Calu3 (cell line): ENCODE measurements at regions of chr12 and their contacts with region 1.

Region 1: DNA sequence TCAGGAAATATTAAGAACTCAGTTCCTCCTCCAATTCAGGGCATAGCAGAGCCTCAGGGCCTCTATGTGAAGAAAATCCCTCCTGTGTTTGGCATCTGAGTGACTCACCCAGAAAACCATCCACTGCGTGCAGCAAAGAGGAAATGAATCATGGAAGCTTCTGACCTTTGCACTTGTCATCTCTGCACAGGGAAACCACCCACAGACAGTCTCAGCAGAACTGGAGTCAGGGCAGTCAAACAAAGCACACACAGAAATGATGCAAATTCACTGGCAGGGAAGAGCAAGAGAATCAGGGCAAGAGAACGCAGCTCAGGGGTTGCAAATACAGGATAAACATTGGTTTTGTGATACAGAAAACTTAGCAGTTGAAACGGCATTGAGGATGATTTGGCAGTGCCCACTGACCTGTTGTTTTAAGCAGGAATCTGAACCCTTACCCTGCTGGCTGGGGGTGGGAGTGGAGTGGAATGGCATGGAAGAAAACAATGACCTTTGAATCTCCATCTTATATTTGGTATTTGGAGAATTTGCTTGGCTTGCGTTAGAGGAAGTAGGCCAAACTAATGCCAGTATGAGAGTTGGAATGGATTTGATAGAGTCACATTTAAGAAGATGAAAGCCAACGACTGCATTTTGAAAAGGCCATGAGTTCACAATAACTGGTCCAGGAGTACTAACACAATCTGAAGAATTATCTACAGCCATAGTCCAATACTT is 53.5 kb downstream of the PHLDA1 start:
- DNase-seq: peak; percentile 92
- H3K4me3 Mint-ChIP-seq: peak overlapping the region; percentile 51
- H3K27ac Mint-ChIP-seq: peak overlapping the region; percentile 97
- H3K4me1 Mint-ChIP-seq: peaks cover 65% of the 10 kb centered on the region
- H3K27me3 Mint-ChIP-seq: no peaks in the 10 kb centered on the region
- CTCF ChIP-seq: no peak

Region 2: DNA sequence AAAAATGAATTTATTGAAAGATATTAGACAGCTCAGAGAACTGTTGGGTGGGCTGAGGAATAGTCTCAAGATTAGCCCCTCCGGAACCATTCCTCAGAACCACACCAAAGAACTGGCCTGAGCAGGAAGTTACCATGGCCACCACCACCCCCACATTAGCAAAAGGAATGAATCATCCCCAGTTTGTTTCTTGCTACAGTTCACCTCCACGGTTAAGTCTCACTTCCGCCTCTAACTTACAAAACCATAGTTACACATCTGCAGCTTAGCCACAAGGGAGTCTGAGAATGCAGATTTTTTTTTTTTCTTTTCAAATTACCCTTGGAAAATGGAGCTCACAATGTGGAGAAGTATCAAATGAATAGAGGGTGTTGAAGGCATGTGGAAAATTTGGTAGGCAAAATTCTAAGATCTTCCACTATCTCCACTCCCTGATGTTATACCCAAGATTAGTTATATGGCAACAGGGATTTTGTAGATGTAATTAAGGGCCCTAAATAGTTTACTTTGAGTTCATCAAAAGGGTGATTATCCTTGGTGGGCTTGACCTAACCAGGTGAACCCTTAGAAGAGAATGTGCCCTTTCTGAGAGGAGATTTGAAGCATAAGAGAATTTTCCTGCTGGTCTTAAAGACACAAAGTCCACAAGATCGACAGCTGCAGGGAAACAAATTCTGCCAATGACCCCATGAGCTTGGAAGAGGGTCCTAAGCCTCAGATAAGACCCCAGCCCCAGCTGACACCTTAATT is 336.9 kb before region 1 on chr12:
- CTCF ChIA-PET with region 1: no interaction called
- intact Hi-C with region 1: loop called (anchors 2 kb)
- DNase-seq: peak; percentile 83
- H3K4me3 Mint-ChIP-seq: peak overlapping the region; percentile 46
- H3K27ac Mint-ChIP-seq: peak overlapping the region; percentile 99
- H3K4me1 Mint-ChIP-seq: peaks cover 72% of the 10 kb centered on the region
- H3K27me3 Mint-ChIP-seq: no peaks in the 10 kb centered on the region
- CTCF ChIP-seq: no peak

Region 3: DNA sequence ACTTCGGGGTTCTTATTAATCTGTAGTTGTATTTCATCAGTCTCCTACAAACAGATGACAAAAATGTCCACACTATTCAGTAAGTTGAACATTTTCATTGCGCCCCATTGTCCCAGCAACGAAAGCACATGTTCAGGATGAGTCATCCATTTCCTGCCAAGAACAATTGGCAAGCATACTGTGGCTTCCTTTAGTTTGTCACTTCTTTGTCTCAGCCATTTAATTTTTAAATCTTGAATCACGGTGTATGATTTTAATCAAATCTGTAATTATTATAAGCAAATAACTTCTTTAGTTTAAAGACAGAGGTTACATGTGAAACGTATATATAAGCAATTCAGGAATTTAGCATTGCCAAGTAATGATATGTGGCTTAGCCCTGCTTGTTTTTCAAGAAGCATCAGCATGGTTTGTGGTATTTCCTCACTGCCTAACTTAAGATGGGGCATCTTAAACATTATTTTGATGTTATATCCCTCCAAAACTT is 255.4 kb before region 1 on chr12:
- CTCF ChIA-PET with region 1: no interaction called
- intact Hi-C with region 1: loop called (anchors 5 kb)
- DNase-seq: peak; percentile 48
- H3K4me3 Mint-ChIP-seq: peak overlapping the region; percentile 3
- H3K27ac Mint-ChIP-seq: peak overlapping the region; percentile 94
- H3K4me1 Mint-ChIP-seq: peaks cover 64% of the 10 kb centered on the region
- H3K27me3 Mint-ChIP-seq: no peaks in the 10 kb centered on the region
- CTCF ChIP-seq: no peak

Region 4: GRCh38 chr12:75825686-75826085 is 152.4 kb before region 1 on chr12:
- CTCF ChIA-PET with region 1: no interaction called
- intact Hi-C with region 1: loop called (anchors 2 kb)
- DNase-seq: peak; percentile 63
- H3K4me3 Mint-ChIP-seq: no peak overlapping the region
- H3K27ac Mint-ChIP-seq: no peak overlapping the region
- H3K4me1 Mint-ChIP-seq: no peaks in the 10 kb centered on the region
- H3K27me3 Mint-ChIP-seq: no peaks in the 10 kb centered on the region
- CTCF ChIP-seq: no peak

Region 5: DNA sequence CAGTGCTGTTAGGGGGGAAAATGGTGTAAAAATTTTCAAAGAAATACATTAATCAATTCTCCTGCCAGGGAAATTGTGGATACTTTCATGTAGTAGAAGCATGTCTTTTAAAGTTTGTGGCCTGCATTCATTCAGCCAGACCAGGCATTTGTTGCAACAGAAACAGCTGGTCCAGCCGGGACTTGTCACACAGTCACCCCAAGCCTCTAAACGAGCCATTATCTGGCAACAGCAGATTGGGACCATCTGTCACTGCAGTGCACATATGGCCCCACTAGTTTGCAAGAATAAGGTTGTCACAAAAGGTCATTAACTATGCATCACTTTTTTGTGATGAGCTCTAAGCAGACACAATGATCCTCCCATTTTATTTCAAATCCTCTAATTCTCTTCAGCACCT is 140.4 kb before region 1 on chr12:
- CTCF ChIA-PET with region 1: no interaction called
- intact Hi-C with region 1: no loop called
- DNase-seq: no peak
- H3K4me3 Mint-ChIP-seq: no peak overlapping the region
- H3K27ac Mint-ChIP-seq: no peak overlapping the region
- H3K4me1 Mint-ChIP-seq: peaks cover 26% of the 10 kb centered on the region
- H3K27me3 Mint-ChIP-seq: no peaks in the 10 kb centered on the region
- CTCF ChIP-seq: no peak

Region 6: DNA sequence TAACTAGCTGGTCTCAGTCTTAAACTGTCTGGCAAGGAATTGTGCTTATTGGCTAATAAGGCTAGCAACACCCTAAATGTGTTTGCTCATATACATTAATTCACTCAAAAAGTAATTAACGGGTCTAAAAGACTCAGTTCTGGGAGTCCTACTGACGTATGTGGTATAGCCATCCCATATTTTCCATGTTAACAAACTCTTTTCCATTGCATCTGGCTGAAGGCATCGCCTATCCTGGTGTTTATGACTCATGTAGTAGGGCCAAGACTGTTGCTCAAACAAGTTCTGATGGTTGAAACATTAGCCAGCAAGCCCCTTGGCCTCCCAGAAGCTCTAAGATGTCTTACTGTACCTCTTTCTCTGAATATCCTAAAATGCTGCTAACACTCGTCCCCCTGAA is 45.0 kb before region 1 on chr12:
- CTCF ChIA-PET with region 1: interaction called, 4 read pairs
- intact Hi-C with region 1: loop called (anchors 1 kb)
- DNase-seq: peak; percentile 69
- H3K4me3 Mint-ChIP-seq: peak overlapping the region; percentile 4
- H3K27ac Mint-ChIP-seq: peak overlapping the region; percentile 43
- H3K4me1 Mint-ChIP-seq: peaks cover 34% of the 10 kb centered on the region
- H3K27me3 Mint-ChIP-seq: no peaks in the 10 kb centered on the region
- CTCF ChIP-seq: no peak

Region 7: GRCh38 chr12:76020731-76021672 is 42.9 kb after region 1 on chr12:
- CTCF ChIA-PET with region 1: interaction called, 11 read pairs
- intact Hi-C with region 1: loop called (anchors 1 kb)
- DNase-seq: peak; percentile 70
- H3K4me3 Mint-ChIP-seq: peak overlapping the region; percentile 25
- H3K27ac Mint-ChIP-seq: peak overlapping the region; percentile 97
- H3K4me1 Mint-ChIP-seq: peaks cover 56% of the 10 kb centered on the region
- H3K27me3 Mint-ChIP-seq: no peaks in the 10 kb centered on the region
- CTCF ChIP-seq: no peak